ENCODE measurements at regions of chr3 and their contacts with region 1.

Region 1: GRCh38 chr3:57961828-57962447 is 46.3 kb upstream of the FLNB start:
- DNase-seq: peak; percentile 79
- H3K4me3 Mint-ChIP-seq: no peak overlapping the region
- H3K27ac Mint-ChIP-seq: no peak overlapping the region
- H3K4me1 Mint-ChIP-seq: peaks cover 14% of the 10 kb centered on the region
- H3K27me3 Mint-ChIP-seq: no peaks in the 10 kb centered on the region
- CTCF ChIP-seq: peak; percentile 70

Region 2: DNA sequence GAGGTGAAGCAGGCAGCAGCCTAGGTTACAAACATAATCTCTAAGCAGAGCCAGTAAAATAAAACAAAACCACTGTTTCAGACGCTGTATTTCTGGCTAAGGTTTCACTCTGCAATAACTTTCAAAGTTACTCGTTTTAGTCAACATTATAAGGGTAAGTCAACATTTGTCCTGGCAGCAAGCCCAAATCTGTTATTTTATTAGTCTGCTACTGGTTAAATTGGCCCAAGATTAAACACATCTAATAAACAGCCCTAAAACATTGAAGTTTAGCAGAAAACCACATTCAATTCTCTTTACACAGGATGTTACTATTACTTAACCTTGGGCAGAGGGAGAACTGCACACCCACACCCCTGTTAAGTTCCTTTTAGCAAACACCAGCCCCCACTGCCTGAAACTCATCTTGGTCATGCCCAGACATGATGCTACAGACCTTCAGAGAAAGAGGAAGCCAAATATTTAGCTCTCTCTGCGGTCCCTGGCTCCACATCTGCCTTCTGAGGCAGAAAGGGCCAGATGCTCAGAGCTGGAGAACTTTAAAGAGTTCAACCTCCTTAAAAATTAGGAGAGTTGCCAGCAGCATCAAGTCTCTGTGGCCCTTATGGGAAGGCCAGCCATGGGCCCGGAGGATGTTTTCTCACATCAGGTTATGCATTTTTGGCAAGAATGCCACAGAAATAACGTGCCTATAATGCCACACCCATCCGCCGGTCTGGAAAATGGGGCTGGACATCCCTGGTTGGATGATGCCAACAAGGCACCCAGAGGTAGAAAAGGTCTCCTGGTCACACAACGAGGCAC is 1178.1 kb before region 1 on chr3:
- CTCF ChIA-PET with region 1: no interaction called
- POLR2A ChIA-PET with region 1: no interaction called
- intact Hi-C with region 1: no loop called
- DNase-seq: peak; percentile 92
- H3K4me3 Mint-ChIP-seq: peak overlapping the region; percentile 43
- H3K27ac Mint-ChIP-seq: peak overlapping the region; percentile 92
- H3K4me1 Mint-ChIP-seq: peaks cover 40% of the 10 kb centered on the region
- H3K27me3 Mint-ChIP-seq: no peaks in the 10 kb centered on the region
- CTCF ChIP-seq: no peak

Region 3: DNA sequence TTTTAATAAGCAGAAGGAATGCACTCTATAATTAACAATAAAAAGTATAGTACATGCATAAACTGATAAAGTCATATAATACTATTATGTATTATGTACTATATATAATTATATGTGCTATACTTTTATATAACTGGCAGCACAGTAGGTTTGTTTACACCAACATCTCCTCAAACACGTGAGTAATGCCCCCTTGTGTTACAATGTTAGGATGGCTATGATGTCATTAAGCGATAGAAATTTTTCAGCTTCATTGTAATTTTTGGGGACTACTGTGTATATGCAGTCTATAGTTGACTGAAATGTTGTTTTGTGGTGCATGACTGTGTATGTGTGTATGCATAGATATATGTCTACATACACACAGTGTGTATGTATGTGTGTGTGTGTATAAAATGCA is 105.3 kb before region 1 on chr3:
- CTCF ChIA-PET with region 1: no interaction called
- POLR2A ChIA-PET with region 1: no interaction called
- intact Hi-C with region 1: no loop called
- DNase-seq: peak; percentile 13
- H3K4me3 Mint-ChIP-seq: no peak overlapping the region
- H3K27ac Mint-ChIP-seq: no peak overlapping the region
- H3K4me1 Mint-ChIP-seq: peaks cover 6% of the 10 kb centered on the region
- H3K27me3 Mint-ChIP-seq: no peaks in the 10 kb centered on the region
- CTCF ChIP-seq: no peak

Region 4: DNA sequence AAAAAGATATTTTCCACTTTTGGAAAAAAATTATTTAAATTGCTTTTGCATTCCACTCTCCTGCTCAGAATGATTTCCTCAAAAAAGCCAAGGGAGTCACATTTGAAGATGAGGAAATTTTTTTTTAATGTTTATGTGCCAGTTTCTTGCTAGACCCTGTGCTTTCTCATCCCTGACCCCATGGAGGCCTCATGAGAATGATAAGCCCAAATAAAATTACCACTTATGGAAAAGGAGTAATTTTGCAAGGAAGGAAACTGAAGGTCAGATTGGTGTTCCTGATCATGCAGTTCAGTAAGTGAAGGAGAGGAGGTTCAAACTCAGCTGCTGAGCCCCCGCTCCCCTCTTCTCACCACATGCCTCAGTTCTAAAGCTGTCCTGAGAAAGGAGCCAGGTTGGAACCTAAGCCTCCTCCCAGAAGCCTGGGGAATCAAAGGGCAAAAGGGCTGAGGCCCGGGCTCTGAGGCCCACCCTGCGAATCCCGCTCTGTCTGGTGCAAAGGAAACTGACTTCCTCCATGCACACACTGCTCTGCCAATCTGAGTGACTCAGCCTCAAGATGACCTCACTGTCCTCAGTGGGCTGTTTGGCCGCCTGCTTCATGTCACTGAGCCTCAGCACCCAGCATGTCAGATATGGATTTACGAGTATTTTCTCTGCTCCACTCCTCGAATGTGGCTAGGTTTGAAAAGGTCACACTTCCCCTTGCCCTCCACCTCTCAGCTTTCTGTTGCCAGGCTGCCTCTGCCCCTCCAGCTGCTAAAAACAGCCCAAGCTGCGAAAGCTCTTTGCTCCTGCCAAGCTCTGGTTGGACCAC is 10.7 kb before region 1 on chr3:
- CTCF ChIA-PET with region 1: interaction called, 13 read pairs
- POLR2A ChIA-PET with region 1: interaction called, 4 read pairs
- intact Hi-C with region 1: no loop called
- DNase-seq: peak; percentile 75
- H3K4me3 Mint-ChIP-seq: no peak overlapping the region
- H3K27ac Mint-ChIP-seq: peak overlapping the region; percentile 49
- H3K4me1 Mint-ChIP-seq: peaks cover 19% of the 10 kb centered on the region
- H3K27me3 Mint-ChIP-seq: no peaks in the 10 kb centered on the region
- CTCF ChIP-seq: no peak

Region 5: GRCh38 chr3:58093573-58094195 is 131.7 kb after region 1 on chr3:
- CTCF ChIA-PET with region 1: interaction called, 4 read pairs
- POLR2A ChIA-PET with region 1: no interaction called
- intact Hi-C with region 1: loop called (anchors 5 kb)
- DNase-seq: peak; percentile 89
- H3K4me3 Mint-ChIP-seq: no peak overlapping the region
- H3K27ac Mint-ChIP-seq: peak overlapping the region; percentile 72
- H3K4me1 Mint-ChIP-seq: peaks cover 21% of the 10 kb centered on the region
- H3K27me3 Mint-ChIP-seq: no peaks in the 10 kb centered on the region
- CTCF ChIP-seq: no peak

Region 6: GRCh38 chr3:58167431-58168351 is 205.8 kb after region 1 on chr3:
- CTCF ChIA-PET with region 1: interaction called, 3 read pairs
- POLR2A ChIA-PET with region 1: no interaction called
- intact Hi-C with region 1: loop called (anchors 5 kb)
- DNase-seq: peak; percentile 54
- H3K4me3 Mint-ChIP-seq: no peak overlapping the region
- H3K27ac Mint-ChIP-seq: no peak overlapping the region
- H3K4me1 Mint-ChIP-seq: peaks cover 4% of the 10 kb centered on the region
- H3K27me3 Mint-ChIP-seq: no peaks in the 10 kb centered on the region
- CTCF ChIP-seq: peak; percentile 67

Measured in MCF 10A (cell line).